ENCODE measurements at regions of chr15 and their contacts with region 1.

Region 1: GRCh38 chr15:66883322-66883911 is 181.4 kb downstream of the SMAD6 start:
- DNase-seq: peak; percentile 99
- H3K4me3 ChIP-seq: no peak overlapping the region
- H3K27ac ChIP-seq: peak overlapping the region; percentile 78
- H3K4me1 ChIP-seq: peaks cover 25% of the 10 kb centered on the region
- H3K27me3 ChIP-seq: no peaks in the 10 kb centered on the region
- CTCF ChIP-seq: no peak
- POLR2A ChIP-seq: no peak

Region 2: DNA sequence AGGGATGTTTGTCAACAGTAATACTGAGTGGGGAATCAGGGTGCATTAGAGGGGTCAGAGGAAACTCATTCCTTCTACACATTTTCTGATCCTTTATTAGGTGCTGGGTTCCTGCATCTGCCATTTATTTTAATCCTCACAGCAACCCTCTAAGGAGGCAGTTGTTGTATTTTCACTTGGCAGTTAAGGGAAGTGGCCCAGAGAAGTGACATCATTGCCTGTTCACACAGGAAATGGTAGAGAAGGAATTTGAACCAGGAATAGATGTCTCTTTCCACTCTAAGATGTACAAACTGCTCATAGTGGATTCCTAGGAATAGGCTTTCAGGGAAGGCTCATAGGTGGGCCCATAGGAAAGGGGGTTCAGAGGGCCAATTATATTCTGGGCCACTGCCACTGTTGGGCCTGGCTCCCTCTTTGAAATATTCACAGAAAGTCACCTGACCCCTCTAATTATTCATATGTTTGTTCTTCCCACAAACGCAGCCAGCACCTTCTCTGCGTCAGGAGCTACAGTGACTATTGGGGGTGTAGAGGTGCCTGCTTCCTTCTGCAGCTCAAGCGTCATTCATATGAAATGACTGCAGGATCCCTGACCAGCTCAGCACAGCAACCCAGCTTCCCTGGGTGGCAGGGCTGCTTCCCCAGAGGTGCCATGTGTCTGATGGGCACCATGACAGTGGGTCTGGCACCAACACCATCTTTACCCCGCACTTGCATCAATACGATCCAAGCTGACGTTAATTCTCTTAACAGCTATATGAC is 18.1 kb after region 1 on chr15:
- CTCF ChIA-PET with region 1: interaction called, 30 read pairs
- POLR2A ChIA-PET with region 1: no interaction called
- dilution Hi-C with region 1: no loop called
- intact Hi-C with region 1: loop called (anchors 1 kb)
- DNase-seq: peak; percentile 20
- H3K4me3 ChIP-seq: no peak overlapping the region
- H3K27ac ChIP-seq: no peak overlapping the region
- H3K4me1 ChIP-seq: peaks cover 6% of the 10 kb centered on the region
- H3K27me3 ChIP-seq: no peaks in the 10 kb centered on the region
- CTCF ChIP-seq: no peak
- POLR2A ChIP-seq: no peak

Region 3: GRCh38 chr15:66907826-66908743 is 24.7 kb after region 1 on chr15:
- CTCF ChIA-PET with region 1: interaction called, 30 read pairs
- POLR2A ChIA-PET with region 1: no interaction called
- dilution Hi-C with region 1: no loop called
- intact Hi-C with region 1: loop called (anchors 1 kb)
- DNase-seq: no peak
- H3K4me3 ChIP-seq: no peak overlapping the region
- H3K27ac ChIP-seq: no peak overlapping the region
- H3K4me1 ChIP-seq: no peaks in the 10 kb centered on the region
- H3K27me3 ChIP-seq: peaks cover 0 to 7% of the 10 kb centered on the region in 2 experiments
- CTCF ChIP-seq: no peak
- POLR2A ChIP-seq: no peak

Measured in endothelial cell of umbilical vein (primary cell).